Caco-2 (cell line): ENCODE measurements at regions of chr1 and their contacts with region 1.

Region 1: GRCh38 chr1:160658162-160658813 is 11.4 kb upstream of the SLAMF1 start:
- DNase-seq: peak; percentile 86 to 93
- H3K4me3 ChIP-seq: no peak overlapping the region
- H3K4me3 Mint-ChIP-seq: peak overlapping the region; percentile 28
- H3K27ac Mint-ChIP-seq: peak overlapping the region; percentile 38
- H3K4me1 ChIP-seq: peaks cover 40% of the 10 kb centered on the region
- H3K4me1 Mint-ChIP-seq: peaks cover 23% of the 10 kb centered on the region
- H3K27me3 ChIP-seq: no peaks in the 10 kb centered on the region
- H3K27me3 Mint-ChIP-seq: no peaks in the 10 kb centered on the region
- CTCF ChIP-seq: no peak

Region 2: GRCh38 chr1:160618763-160619274 is 39.5 kb before region 1 on chr1:
- CTCF ChIA-PET with region 1: no interaction called
- POLR2A ChIA-PET with region 1: no interaction called
- intact Hi-C with region 1: loop called (anchors 1 kb)
- DNase-seq: peak in 1 of 2 experiments; percentile 39
- H3K4me3 ChIP-seq: no peak overlapping the region
- H3K4me3 Mint-ChIP-seq: no peak overlapping the region
- H3K27ac Mint-ChIP-seq: no peak overlapping the region
- H3K4me1 ChIP-seq: no peaks in the 10 kb centered on the region
- H3K4me1 Mint-ChIP-seq: no peaks in the 10 kb centered on the region
- H3K27me3 ChIP-seq: no peaks in the 10 kb centered on the region
- H3K27me3 Mint-ChIP-seq: no peaks in the 10 kb centered on the region
- CTCF ChIP-seq: peak; percentile 49 to 56

Region 3: GRCh38 chr1:160629286-160630210 is 28.7 kb before region 1 on chr1:
- CTCF ChIA-PET with region 1: no interaction called
- POLR2A ChIA-PET with region 1: no interaction called
- intact Hi-C with region 1: loop called (anchors 1 kb)
- DNase-seq: no peak
- H3K4me3 ChIP-seq: no peak overlapping the region
- H3K4me3 Mint-ChIP-seq: no peak overlapping the region
- H3K27ac Mint-ChIP-seq: no peak overlapping the region
- H3K4me1 ChIP-seq: peaks cover 35% of the 10 kb centered on the region
- H3K4me1 Mint-ChIP-seq: peaks cover 18% of the 10 kb centered on the region
- H3K27me3 ChIP-seq: no peaks in the 10 kb centered on the region
- H3K27me3 Mint-ChIP-seq: no peaks in the 10 kb centered on the region
- CTCF ChIP-seq: no peak

Region 4: GRCh38 chr1:160637821-160638539 is 20.3 kb before region 1 on chr1:
- CTCF ChIA-PET with region 1: no interaction called
- POLR2A ChIA-PET with region 1: no interaction called
- intact Hi-C with region 1: loop called (anchors 1 kb)
- DNase-seq: peak in 1 of 2 experiments; percentile 24
- H3K4me3 ChIP-seq: no peak overlapping the region
- H3K4me3 Mint-ChIP-seq: peak overlapping the region; percentile 27
- H3K27ac Mint-ChIP-seq: peak overlapping the region; percentile 64
- H3K4me1 ChIP-seq: peaks cover 45% of the 10 kb centered on the region
- H3K4me1 Mint-ChIP-seq: peaks cover 38% of the 10 kb centered on the region
- H3K27me3 ChIP-seq: no peaks in the 10 kb centered on the region
- H3K27me3 Mint-ChIP-seq: no peaks in the 10 kb centered on the region
- CTCF ChIP-seq: no peak

Region 5: GRCh38 chr1:160675641-160676410 is 17.5 kb after region 1 on chr1:
- CTCF ChIA-PET with region 1: interaction called, 3 read pairs
- POLR2A ChIA-PET with region 1: no interaction called
- intact Hi-C with region 1: loop called (anchors 2 kb)
- DNase-seq: peak; percentile 70 to 72
- H3K4me3 ChIP-seq: no peak overlapping the region
- H3K4me3 Mint-ChIP-seq: no peak overlapping the region
- H3K27ac Mint-ChIP-seq: no peak overlapping the region
- H3K4me1 ChIP-seq: no peaks in the 10 kb centered on the region
- H3K4me1 Mint-ChIP-seq: no peaks in the 10 kb centered on the region
- H3K27me3 ChIP-seq: no peaks in the 10 kb centered on the region
- H3K27me3 Mint-ChIP-seq: no peaks in the 10 kb centered on the region
- CTCF ChIP-seq: peak; percentile 68 to 83